Dorsolateral prefrontal cortex (tissue), 120 donors: ENCODE measurements at regions of chr7 and their contacts with region 1.

Region 1: DNA sequence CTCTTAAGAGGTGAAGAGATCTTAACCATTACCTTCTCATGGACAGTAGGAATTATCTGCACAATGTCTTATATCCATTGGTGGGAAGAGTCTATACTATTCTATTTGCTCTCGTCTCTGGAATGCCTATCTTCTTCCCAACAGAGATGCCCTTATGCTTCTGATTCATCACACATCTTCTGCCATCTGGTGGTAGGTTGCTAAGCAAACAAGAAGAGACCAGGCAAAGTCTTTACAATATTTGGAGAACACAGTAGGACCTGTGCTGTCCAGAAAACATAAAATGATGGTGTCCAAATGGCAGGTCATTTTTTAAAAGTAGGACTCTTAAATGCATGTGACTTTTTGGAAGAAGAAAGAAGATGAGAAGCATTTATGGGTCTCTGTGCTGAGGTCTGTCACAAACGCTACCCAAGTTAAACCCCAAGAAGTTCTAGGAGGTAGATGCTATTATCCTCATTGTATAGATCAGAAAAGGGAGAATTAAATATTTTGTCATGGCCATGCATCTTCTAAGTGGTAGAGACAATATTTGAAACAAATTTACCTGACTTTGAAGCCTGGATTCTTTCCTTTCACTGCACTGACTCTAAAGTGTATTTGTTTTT is 67.8 kb upstream of the NXPH1 start:
- DNase-seq: no peak
- H3K4me3 ChIP-seq: no peak overlapping the region
- H3K27ac ChIP-seq: no peak overlapping the region
- H3K27me3 ChIP-seq: no peaks in the 10 kb centered on the region
- CTCF ChIP-seq: peak in 55 of 56 donors; percentile 31 to 80 (median 59)

Region 2: GRCh38 chr7:8310876-8311275 is 54.7 kb before region 1 on chr7:
- intact Hi-C with region 1: loop called in 1 of 2 experiments (anchors 10 kb)
- DNase-seq: no peak
- H3K4me3 ChIP-seq: no peak overlapping the region
- H3K27ac ChIP-seq: peak overlapping the region in 1 of 59 donors; percentile 48
- H3K27me3 ChIP-seq: peaks cover 0 to 4% (median 0%) of the 10 kb centered on the region in 45 donors
- CTCF ChIP-seq: peak in 34 of 56 donors; percentile 3 to 61 (median 29)